Heart left ventricle (tissue), 16 donors: ENCODE measurements at regions of chrX and their contacts with region 1.

Region 1: DNA sequence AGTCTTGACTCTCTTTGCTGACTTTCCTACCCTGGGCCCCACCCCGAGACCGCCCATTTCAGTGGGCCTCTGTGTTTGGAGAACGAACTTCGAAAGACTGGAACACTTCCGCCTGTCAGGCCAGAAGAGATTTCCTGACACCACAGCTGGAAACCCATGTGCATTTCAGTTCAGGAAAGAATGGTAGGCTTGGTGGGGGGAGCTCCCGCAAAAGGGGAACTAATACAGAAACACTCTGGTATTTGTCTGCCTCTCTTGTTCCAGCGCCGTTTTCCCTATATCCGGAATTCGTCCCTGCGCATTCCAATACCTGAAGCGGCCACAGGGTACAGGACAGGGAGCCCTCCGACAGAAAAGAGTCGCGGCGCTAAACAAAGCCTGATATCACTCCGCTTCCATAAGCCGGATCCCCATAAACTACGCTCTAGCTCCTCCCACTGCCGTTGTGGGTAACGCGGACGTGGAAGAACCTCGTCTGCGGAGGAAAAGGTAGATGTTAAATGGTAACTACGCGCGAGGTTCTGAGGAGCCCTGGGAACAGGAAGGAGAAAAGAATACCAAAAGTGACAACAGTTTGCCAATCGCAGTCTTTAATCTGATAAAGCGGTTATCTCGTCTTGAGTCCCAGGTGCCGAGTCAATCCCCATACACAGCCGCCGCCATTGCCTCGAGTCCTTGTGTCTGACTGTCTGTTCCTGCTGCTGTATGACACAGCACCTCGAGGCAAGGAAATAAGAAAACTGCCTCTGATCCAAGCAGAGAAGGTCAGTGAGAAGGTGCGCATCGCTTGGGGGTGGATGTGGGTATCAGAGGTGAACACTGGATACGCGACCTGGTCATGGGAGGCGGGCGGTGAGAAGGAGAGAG is at the start of gene ARMCX5:
- DNase-seq: peak; percentile 69 to 78 (median 71)
- ATAC-seq: peak; percentile 96 to 99 (median 97)
- H3K4me3 ChIP-seq: peak within 1 kb of the TSS; percentile 25 to 90 (median 62)
- H3K27ac ChIP-seq: peak within 1 kb of the TSS in 11 of 12 donors; percentile 48 to 84 (median 76)
- H3K4me1 ChIP-seq: peaks cover 0 to 11% (median 0%) of the 10 kb centered on the region in 12 donors
- H3K27me3 ChIP-seq: no peaks in the 10 kb centered on the region
- CTCF ChIP-seq: peak in 1 of 12 donors; percentile 26
- POLR2A ChIP-seq: peak in 1 of 2 donors; percentile 32
- total RNA-seq, gene ARMCX5: 3.0 to 7.6 (median 5.5) TPM

Region 2: DNA sequence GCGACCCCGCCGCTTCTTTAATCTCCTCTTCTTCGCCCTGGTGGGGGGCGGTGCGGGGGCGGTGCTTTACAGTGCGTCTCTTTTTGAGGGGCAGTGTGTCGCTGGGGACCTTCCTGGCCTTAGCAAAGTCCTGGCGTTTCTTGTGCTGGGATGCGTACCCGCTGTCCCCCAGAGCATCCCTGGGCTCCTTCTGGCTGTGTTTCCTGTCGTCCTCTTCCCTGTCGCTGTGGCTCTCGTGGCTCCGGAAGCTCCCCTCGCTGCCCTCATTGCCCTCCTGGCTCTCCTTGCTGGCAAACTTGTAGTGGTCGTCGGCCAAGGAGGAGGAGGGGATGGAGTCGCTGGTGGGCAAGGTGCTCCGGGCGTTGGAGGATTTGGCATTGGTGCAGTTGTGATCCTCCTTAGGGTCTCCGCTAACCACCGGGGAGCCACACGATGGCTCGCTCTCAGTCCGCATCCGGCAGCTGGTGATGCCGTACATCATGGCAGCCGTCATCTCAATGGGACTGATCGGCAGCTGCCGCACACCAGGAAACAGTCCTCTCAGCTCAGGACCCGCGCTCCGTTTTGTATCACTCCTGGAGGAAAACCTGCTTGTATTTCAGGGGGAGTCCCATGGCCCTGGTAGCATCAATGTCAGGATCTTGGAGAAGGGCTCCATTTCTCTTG is 52.4 kb before region 1 on chrX:
- intact Hi-C with region 1: no loop called
- DNase-seq: no peak
- ATAC-seq: no peak
- H3K4me3 ChIP-seq: peak overlapping the region in 7 of 12 donors; percentile 12 to 36 (median 24)
- H3K27ac ChIP-seq: no peak overlapping the region
- H3K4me1 ChIP-seq: no peaks in the 10 kb centered on the region
- H3K27me3 ChIP-seq: peaks cover 0 to 48% (median 0%) of the 10 kb centered on the region in 9 donors
- CTCF ChIP-seq: no peak
- POLR2A ChIP-seq: no peak

Region 3: GRCh38 chrX:102652031-102652688 is 52.8 kb after region 1 on chrX:
- intact Hi-C with region 1: loop called in 4 of 10 experiments (anchors 2 to 10 kb)
- DNase-seq: peak in 3 of 5 donors; percentile 37 to 46 (median 45)
- ATAC-seq: peak; percentile 45 to 73 (median 64)
- H3K4me3 ChIP-seq: peak overlapping the region; percentile 48 to 82 (median 66)
- H3K27ac ChIP-seq: peak overlapping the region in 9 of 12 donors; percentile 32 to 87 (median 59)
- H3K4me1 ChIP-seq: peaks cover 0 to 9% (median 0%) of the 10 kb centered on the region in 12 donors
- H3K27me3 ChIP-seq: no peaks in the 10 kb centered on the region
- CTCF ChIP-seq: peak; percentile 26 to 68 (median 46)
- POLR2A ChIP-seq: no peak

Region 4: DNA sequence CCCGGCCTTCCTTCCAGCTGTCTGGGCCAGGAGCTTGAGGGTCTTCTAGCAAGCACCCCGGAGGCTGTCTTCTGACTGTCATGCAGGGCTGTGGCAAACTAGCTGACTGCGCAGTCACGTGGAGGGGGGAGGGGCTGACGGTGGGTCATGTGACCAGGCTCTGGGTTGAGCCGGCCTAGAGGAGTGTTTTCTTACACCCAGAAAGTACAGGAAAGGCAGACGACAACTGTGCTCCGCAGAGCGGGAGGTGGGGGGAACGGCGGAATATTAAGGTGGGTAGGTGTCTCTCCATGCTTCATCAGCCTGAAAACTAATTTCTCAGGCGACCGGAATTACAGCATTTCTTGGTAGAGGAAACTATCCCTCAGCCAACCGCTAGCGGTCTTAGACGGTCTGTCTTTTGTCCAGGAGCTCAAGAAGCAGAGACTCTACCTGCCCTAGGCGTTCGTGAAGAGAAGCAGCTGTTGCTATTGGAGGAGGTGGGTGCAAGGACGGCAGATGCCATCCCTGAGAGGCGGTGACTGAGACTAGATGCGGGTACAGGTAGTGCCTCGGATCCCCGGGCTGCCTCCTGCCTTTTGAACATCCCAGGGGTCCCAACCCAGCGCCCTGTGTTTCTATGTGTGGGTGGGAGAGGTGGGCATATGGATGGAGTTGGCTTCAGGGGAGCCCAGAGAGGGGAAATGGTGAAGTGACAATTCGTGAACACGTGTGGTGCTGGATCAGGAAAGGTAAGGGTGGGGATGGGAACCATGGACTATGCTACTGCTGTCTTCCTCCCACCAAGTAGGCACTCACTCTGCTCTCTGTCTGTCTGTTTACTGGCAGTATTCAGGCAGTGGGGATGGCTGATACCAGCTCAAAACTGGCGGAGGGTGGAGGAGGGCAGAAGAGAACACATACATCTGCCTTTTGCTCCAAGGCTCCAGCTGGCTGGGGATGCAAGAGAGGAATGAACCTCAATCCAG is 60.8 kb after region 1 on chrX:
- intact Hi-C with region 1: loop called in 1 of 10 experiments (anchors 10 kb)
- DNase-seq: peak; percentile 83 to 90 (median 87)
- ATAC-seq: peak; percentile 96 to 100 (median 98)
- H3K4me3 ChIP-seq: peak overlapping the region; percentile 5 to 68 (median 48)
- H3K27ac ChIP-seq: peak overlapping the region in 9 of 12 donors; percentile 19 to 73 (median 51)
- H3K4me1 ChIP-seq: peaks cover 0 to 14% (median 0%) of the 10 kb centered on the region in 12 donors
- H3K27me3 ChIP-seq: no peaks in the 10 kb centered on the region
- CTCF ChIP-seq: peak in 1 of 12 donors; percentile 12
- POLR2A ChIP-seq: peak in 1 of 2 donors; percentile 46

Region 5: GRCh38 chrX:102728641-102729040 is 129.3 kb after region 1 on chrX:
- intact Hi-C with region 1: no loop called
- DNase-seq: no peak
- ATAC-seq: no peak
- H3K4me3 ChIP-seq: no peak overlapping the region
- H3K27ac ChIP-seq: no peak overlapping the region
- H3K4me1 ChIP-seq: no peaks in the 10 kb centered on the region
- H3K27me3 ChIP-seq: peaks cover 0 to 3% (median 0%) of the 10 kb centered on the region in 9 donors
- CTCF ChIP-seq: no peak
- POLR2A ChIP-seq: no peak

Region 6: GRCh38 chrX:102745857-102746584 is 146.7 kb after region 1 on chrX:
- intact Hi-C with region 1: no loop called
- DNase-seq: peak; percentile 23 to 69 (median 48)
- ATAC-seq: peak in 3 of 4 donors; percentile 62 to 83 (median 79)
- H3K4me3 ChIP-seq: peak overlapping the region; percentile 30 to 76 (median 60)
- H3K27ac ChIP-seq: peak overlapping the region in 1 of 12 donors; percentile 48
- H3K4me1 ChIP-seq: no peaks in the 10 kb centered on the region
- H3K27me3 ChIP-seq: peaks cover 0 to 12% (median 0%) of the 10 kb centered on the region in 9 donors
- CTCF ChIP-seq: no peak
- POLR2A ChIP-seq: no peak

Region 7: DNA sequence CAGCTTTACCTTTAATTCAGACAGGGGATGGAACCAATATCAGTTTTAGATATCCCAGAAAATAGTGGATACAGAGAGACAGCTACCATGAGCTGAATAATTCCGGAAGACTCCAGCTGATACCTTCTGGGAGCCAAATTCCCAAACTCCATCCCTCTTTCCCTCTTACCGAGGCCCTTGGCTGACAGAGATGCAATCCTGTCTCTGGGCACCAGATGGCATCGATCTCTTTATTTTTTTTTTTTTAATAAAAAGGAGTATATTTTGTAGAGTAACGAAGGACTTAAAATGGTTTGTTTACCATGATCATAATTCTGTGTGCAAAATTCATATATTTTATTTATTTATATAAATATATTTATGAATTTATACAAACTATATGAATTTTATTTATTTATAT is 889.0 kb after region 1 on chrX:
- intact Hi-C with region 1: no loop called
- DNase-seq: no peak
- ATAC-seq: no peak
- H3K4me3 ChIP-seq: no peak overlapping the region
- H3K27ac ChIP-seq: no peak overlapping the region
- H3K4me1 ChIP-seq: no peaks in the 10 kb centered on the region
- H3K27me3 ChIP-seq: peaks cover 0 to 14% (median 0%) of the 10 kb centered on the region in 9 donors
- CTCF ChIP-seq: peak in 8 of 12 donors; percentile 7 to 38 (median 26)
- POLR2A ChIP-seq: no peak